T-cell (primary cell): ENCODE measurements at regions of chr3 and their contacts with region 1.

Region 1: DNA sequence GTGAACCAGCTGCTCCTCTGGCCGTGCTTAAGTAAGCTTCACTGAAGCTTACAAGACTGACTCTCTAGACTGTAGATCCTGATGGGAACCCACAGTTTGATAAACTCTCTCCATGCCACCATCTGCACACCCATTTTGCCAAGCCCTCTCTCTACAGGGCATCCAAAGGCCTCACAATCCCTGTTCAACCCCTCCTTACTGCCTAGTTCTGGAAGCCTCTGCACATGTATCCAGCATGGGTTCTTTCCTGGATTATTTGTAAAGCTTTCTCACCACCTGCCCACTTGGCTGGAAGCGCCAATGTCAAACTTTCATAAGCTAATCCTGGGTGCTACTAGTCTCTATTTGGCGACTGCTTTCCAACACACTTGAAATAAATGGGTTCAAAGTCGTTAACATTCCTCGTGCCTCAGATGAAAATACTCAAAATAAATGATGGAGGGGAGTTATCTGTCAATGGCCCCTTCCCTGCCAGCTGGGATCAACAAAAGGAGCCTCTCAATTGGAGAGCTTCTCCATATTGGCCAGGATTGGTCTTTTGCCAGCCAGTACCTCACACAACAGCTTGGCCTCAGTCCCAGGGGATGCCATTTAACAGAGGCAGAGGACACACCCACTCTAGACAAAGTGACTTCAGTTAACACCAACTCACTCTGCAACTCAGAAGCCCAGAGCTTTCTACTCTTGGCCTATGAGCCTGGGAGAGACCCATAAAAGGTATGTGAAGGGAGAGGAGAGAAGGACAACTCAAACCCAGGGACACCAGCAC is 48.1 kb downstream of the SH3BP5 start:
- DNase-seq: no peak
- ATAC-seq: no peak
- H3K4me3 ChIP-seq: no peak overlapping the region
- H3K4me3 Mint-ChIP-seq: peak overlapping the region in 1 of 3 donors; percentile 29
- H3K27ac ChIP-seq: no peak overlapping the region
- H3K27ac Mint-ChIP-seq: peak overlapping the region; percentile 60 to 76
- H3K4me1 ChIP-seq: peaks cover 0 to 74% of the 10 kb centered on the region in 2 experiments
- H3K4me1 Mint-ChIP-seq: peaks cover 69 to 97% (median 77%) of the 10 kb centered on the region in 3 donors
- H3K27me3 ChIP-seq: no peaks in the 10 kb centered on the region
- H3K27me3 Mint-ChIP-seq: no peaks in the 10 kb centered on the region

Region 2: GRCh38 chr3:15313461-15313860 is 29.2 kb after region 1 on chr3:
- CTCF ChIA-PET with region 1: no interaction called
- POLR2A ChIA-PET with region 1: no interaction called
- DNase-seq: peak in 21 of 35 experiments; percentile 7 to 58 (median 26)
- ATAC-seq: peak in 3 of 4 experiments; percentile 24 to 85 (median 49)
- H3K4me3 ChIP-seq: no peak overlapping the region
- H3K4me3 Mint-ChIP-seq: peak overlapping the region in 1 of 3 donors; percentile 37
- H3K27ac ChIP-seq: no peak overlapping the region
- H3K27ac Mint-ChIP-seq: peak overlapping the region; percentile 43 to 66
- H3K4me1 ChIP-seq: peaks cover 0 to 67% of the 10 kb centered on the region in 2 experiments
- H3K4me1 Mint-ChIP-seq: peaks cover 63 to 86% (median 80%) of the 10 kb centered on the region in 3 donors
- H3K27me3 ChIP-seq: no peaks in the 10 kb centered on the region
- H3K27me3 Mint-ChIP-seq: no peaks in the 10 kb centered on the region

Region 3: DNA sequence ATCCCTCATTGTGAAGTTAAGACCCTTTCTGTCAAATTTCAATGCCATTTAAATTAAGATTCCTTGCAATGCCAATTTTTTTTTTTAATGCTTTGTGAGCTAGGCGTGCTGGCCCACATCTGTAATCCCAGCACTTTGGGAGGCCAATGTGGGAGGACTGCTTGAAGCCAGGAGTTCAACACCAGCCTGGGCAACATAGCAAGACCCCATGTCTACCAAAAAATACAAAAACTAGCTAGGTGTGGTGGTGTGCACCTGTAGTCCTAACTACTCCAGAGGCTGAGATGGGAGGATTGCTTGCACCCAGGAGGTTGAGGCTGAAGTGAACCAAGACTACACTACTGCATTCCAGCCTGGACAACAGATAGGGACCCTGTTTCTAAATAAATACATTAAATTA is 53.7 kb after region 1 on chr3:
- CTCF ChIA-PET with region 1: interaction called, 3 read pairs
- POLR2A ChIA-PET with region 1: interaction called in 1 of 2 experiments, 13 read pairs
- DNase-seq: no peak
- ATAC-seq: no peak
- H3K4me3 ChIP-seq: no peak overlapping the region
- H3K4me3 Mint-ChIP-seq: no peak overlapping the region
- H3K27ac ChIP-seq: no peak overlapping the region
- H3K27ac Mint-ChIP-seq: no peak overlapping the region
- H3K4me1 ChIP-seq: peaks cover 2 to 11% of the 10 kb centered on the region in 2 experiments
- H3K4me1 Mint-ChIP-seq: peaks cover 17 to 42% (median 37%) of the 10 kb centered on the region in 3 donors
- H3K27me3 ChIP-seq: no peaks in the 10 kb centered on the region
- H3K27me3 Mint-ChIP-seq: no peaks in the 10 kb centered on the region

Region 4: DNA sequence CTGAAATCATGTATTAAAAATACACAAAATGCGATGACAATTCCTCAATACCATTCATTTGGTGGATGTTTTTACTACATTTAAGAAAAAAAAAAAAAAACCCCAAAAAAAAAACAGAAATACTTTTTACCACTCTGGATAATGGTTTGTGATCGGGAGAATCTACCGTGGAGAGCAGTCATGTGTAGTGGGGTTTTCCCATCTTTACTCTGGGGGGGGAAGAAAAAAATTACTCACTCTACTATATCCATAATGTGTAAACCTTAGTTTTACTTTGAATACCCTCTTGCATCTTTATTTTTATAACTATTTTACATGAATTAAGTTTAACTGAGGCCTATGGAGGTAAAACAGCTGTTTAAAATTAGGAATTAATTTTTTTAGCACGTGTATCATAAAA is 430.1 kb after region 1 on chr3:
- CTCF ChIA-PET with region 1: no interaction called
- POLR2A ChIA-PET with region 1: interaction called in 1 of 2 experiments, 12 read pairs
- DNase-seq: no peak
- ATAC-seq: no peak
- H3K4me3 ChIP-seq: no peak overlapping the region
- H3K4me3 Mint-ChIP-seq: no peak overlapping the region
- H3K27ac ChIP-seq: no peak overlapping the region
- H3K27ac Mint-ChIP-seq: no peak overlapping the region
- H3K4me1 ChIP-seq: no peaks in the 10 kb centered on the region
- H3K4me1 Mint-ChIP-seq: peaks cover 0 to 5% (median 1%) of the 10 kb centered on the region in 3 donors
- H3K27me3 ChIP-seq: no peaks in the 10 kb centered on the region
- H3K27me3 Mint-ChIP-seq: no peaks in the 10 kb centered on the region